HCT116 (cell line): ENCODE measurements at regions of chr9 and their contacts with region 1.

Region 1: GRCh38 chr9:72473474-72474261 is 47.7 kb upstream of the TMC1 start:
- DNase-seq: no peak
- ATAC-seq: no peak
- H3K4me3 ChIP-seq: no peak overlapping the region
- H3K27ac ChIP-seq: no peak overlapping the region
- H3K4me1 ChIP-seq: peaks cover 24 to 41% of the 10 kb centered on the region in 2 experiments
- H3K27me3 ChIP-seq: no peaks in the 10 kb centered on the region
- CTCF ChIP-seq: no peak
- POLR2A ChIP-seq: no peak
- RAD21 ChIP-seq: no peak

Region 2: GRCh38 chr9:72443855-72444254 is 29.8 kb before region 1 on chr9:
- CTCF ChIA-PET with region 1: no interaction called
- POLR2A ChIA-PET with region 1: no interaction called
- RAD21 ChIA-PET with region 1: no interaction called
- intact Hi-C with region 1: loop called (anchors 5 kb)
- DNase-seq: no peak
- ATAC-seq: no peak; the same call in 1 of the 2 replicates
- H3K4me3 ChIP-seq: no peak overlapping the region
- H3K27ac ChIP-seq: no peak overlapping the region
- H3K4me1 ChIP-seq: peaks cover 19 to 34% of the 10 kb centered on the region in 2 experiments
- H3K27me3 ChIP-seq: no peaks in the 10 kb centered on the region
- CTCF ChIP-seq: no peak
- POLR2A ChIP-seq: no peak
- RAD21 ChIP-seq: no peak

Region 3: DNA sequence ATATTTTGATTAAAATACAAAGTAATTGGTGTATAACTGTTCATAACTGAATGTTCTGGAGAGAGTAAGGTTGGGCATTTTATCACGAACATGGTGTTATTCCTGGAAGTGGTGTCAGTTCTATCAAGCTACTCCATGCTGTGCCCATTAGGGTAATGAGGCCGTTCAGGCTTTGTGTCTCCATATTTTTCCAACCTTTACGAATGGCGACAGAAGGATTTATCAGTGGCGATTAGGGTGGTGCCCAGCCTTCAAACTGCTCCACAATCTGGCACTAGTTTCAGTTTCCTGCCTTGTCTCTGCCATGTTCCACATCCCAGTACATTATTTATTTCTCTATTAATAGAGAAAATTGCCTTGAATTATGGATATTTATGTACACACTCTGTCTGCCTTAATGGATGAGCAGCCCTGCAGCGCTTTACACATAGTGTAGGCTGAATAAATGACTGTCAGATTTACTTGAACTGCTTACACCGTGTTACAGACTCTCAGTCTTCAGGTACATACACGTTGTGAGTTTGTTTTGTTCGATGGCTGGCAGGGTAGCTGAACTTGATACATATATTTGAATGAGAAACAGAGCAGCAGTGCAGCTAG is 23.9 kb after region 1 on chr9:
- CTCF ChIA-PET with region 1: no interaction called
- POLR2A ChIA-PET with region 1: no interaction called
- RAD21 ChIA-PET with region 1: no interaction called
- intact Hi-C with region 1: no loop called
- DNase-seq: no peak
- ATAC-seq: no peak
- H3K4me3 ChIP-seq: no peak overlapping the region
- H3K27ac ChIP-seq: no peak overlapping the region
- H3K4me1 ChIP-seq: no peaks in the 10 kb centered on the region
- H3K27me3 ChIP-seq: no peaks in the 10 kb centered on the region
- CTCF ChIP-seq: no peak
- POLR2A ChIP-seq: no peak
- RAD21 ChIP-seq: no peak

Region 4: GRCh38 chr9:72577212-72577753 is 103.6 kb after region 1 on chr9:
- CTCF ChIA-PET with region 1: no interaction called
- POLR2A ChIA-PET with region 1: interaction called, 4 read pairs
- RAD21 ChIA-PET with region 1: no interaction called
- intact Hi-C with region 1: loop called (anchors 5 kb)
- DNase-seq: peak; percentile 68
- ATAC-seq: peak; percentile 37
- H3K4me3 ChIP-seq: peak overlapping the region; percentile 12 to 38; a peak in 3 of 4 replicates
- H3K27ac ChIP-seq: peak overlapping the region; percentile 81
- H3K4me1 ChIP-seq: peaks cover 65 to 88% of the 10 kb centered on the region in 2 experiments
- H3K27me3 ChIP-seq: no peaks in the 10 kb centered on the region
- CTCF ChIP-seq: no peak
- POLR2A ChIP-seq: no peak
- RAD21 ChIP-seq: peak; percentile 47